ENCODE measurements at regions of chr17 and their contacts with region 1.

Region 1: DNA sequence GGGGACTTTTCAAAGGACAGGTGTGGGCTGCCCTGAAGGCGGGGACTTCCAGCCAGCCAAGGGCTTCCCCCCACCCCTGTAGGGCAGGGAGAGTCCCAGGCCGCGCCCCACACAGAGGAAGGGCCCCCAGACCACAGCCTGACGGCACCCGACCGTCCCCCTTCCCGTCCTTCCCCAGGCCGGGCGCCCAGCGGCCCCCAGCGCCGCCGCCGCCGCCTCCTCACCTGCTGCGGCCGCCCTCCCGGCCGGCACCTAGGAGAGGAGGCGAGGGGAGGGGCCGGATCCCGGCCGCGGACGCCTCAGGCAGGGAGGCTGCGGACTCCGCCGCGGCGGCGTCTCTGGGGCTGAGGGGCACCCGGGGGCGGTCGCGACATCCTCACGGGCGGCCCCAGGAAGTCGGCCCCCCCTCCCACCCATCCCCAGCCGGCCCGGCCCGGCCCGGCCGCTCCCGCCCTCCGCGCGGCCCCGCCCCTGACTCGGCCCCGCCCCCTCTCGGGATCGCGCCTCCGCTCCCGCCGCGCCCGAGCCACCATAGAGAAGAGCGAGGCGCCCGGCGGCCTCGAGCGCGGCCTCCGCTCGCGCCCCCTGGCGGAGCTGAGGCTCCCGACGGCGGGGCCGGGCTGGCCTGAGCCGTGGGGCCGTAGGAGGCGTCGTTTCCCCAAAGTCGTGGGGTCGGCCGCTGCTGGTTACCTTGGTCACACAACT is 25.5 kb upstream of the RFFL start:
- DNase-seq: peak; percentile 92
- ATAC-seq: peak; percentile 84
- H3K4me3 ChIP-seq: peak overlapping the region; percentile 48 to 86 (median 76)
- H3K4me3 Mint-ChIP-seq: peak overlapping the region; percentile 94
- H3K27ac ChIP-seq: peak overlapping the region; percentile 91 to 92
- H3K27ac Mint-ChIP-seq: peak overlapping the region; percentile 94
- H3K4me1 ChIP-seq: peaks cover 17 to 21% of the 10 kb centered on the region in 2 donors
- H3K4me1 Mint-ChIP-seq: peaks cover 36% of the 10 kb centered on the region
- H3K27me3 ChIP-seq: no peaks in the 10 kb centered on the region
- H3K27me3 Mint-ChIP-seq: no peaks in the 10 kb centered on the region
- CTCF ChIP-seq: peak; percentile 73

Region 2: DNA sequence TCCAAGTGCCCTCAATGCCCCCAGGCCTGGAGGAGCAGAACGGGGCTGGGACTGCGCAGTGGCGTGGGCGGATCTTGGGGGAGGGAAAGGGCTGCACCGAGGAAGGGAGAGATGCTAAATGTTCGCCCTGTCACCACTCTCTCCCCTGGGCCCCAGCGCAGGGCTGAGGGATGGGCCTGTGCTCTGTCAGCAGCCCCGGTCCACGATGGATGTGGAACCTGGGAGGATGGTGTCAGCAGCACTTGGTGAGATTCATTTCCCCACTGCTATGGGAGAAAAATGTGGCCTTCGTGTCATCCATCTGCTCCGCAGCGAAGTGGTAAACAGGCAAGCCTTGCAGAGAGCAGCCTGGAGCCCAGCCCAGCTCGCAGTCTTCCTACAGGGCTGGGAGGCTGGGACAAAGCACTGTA is 437.6 kb before region 1 on chr17:
- CTCF ChIA-PET with region 1: no interaction called
- POLR2A ChIA-PET with region 1: no interaction called
- intact Hi-C with region 1: no loop called
- DNase-seq: no peak
- ATAC-seq: no peak
- H3K4me3 ChIP-seq: no peak overlapping the region
- H3K4me3 Mint-ChIP-seq: no peak overlapping the region
- H3K27ac ChIP-seq: no peak overlapping the region
- H3K27ac Mint-ChIP-seq: no peak overlapping the region
- H3K4me1 ChIP-seq: no peaks in the 10 kb centered on the region
- H3K4me1 Mint-ChIP-seq: no peaks in the 10 kb centered on the region
- H3K27me3 ChIP-seq: peaks cover 0 to 7% (median 0%) of the 10 kb centered on the region in 4 experiments
- H3K27me3 Mint-ChIP-seq: peaks cover 36% of the 10 kb centered on the region
- CTCF ChIP-seq: no peak

Region 3: DNA sequence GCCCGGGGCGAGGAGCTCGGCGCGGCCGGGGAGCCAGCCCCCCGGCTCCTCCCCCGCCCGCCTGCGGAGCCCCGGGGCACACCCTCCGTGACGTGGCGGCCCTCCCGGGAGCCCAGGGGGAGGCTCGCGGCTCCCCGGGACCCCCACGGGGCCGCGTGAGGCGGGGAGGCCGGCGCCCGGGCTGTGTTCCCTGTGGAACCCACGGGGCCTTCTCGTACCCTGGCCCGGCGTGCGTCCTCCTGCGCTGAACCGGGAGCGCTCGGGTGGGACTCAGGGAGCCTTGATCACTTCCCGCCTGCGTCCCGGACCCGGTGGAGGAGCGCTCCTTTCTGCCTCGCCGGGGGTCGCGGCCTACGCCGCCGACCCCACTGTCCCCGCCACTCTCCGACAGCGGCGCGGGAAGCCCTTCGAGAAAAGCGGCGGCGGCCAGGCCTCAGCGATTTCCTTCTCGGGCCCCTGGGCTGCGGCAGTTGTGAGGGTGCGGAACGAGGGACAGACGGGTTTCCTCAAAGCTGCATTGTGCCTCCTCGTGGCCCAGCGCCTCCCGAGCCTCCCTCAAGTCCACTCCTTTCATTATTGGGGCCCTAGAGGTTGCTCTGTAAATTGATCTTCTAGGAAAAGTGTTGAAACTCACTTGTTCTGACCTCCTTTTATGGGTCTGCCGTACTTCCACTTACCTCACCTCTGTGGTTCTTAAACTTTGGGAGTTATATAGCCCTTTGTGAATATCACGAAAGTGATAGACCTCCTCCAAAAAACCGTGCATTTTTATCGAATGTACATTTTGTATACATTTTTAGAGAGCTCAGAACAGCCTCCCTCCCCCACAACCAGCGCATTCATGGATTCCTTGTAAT is 108.1 kb before region 1 on chr17:
- CTCF ChIA-PET with region 1: interaction called, 7 read pairs
- POLR2A ChIA-PET with region 1: interaction called, 5 read pairs
- intact Hi-C with region 1: loop called (anchors 1 kb)
- DNase-seq: peak; percentile 88
- ATAC-seq: peak; percentile 91
- H3K4me3 ChIP-seq: peak overlapping the region; percentile 8 to 98 (median 93)
- H3K4me3 Mint-ChIP-seq: peak overlapping the region; percentile 98
- H3K27ac ChIP-seq: peak overlapping the region; percentile 95 to 99
- H3K27ac Mint-ChIP-seq: peak overlapping the region; percentile 97
- H3K4me1 ChIP-seq: peaks cover 15 to 16% of the 10 kb centered on the region in 2 donors
- H3K4me1 Mint-ChIP-seq: peaks cover 28% of the 10 kb centered on the region
- H3K27me3 ChIP-seq: no peaks in the 10 kb centered on the region
- H3K27me3 Mint-ChIP-seq: no peaks in the 10 kb centered on the region
- CTCF ChIP-seq: peak; percentile 63

Region 4: GRCh38 chr17:35022536-35023063 is 66.4 kb before region 1 on chr17:
- CTCF ChIA-PET with region 1: interaction called, 18 read pairs
- POLR2A ChIA-PET with region 1: interaction called, 3 read pairs
- intact Hi-C with region 1: loop called (anchors 2 kb)
- DNase-seq: peak; percentile 42
- ATAC-seq: peak; percentile 81
- H3K4me3 ChIP-seq: no peak overlapping the region
- H3K4me3 Mint-ChIP-seq: no peak overlapping the region
- H3K27ac ChIP-seq: peak overlapping the region; percentile 26 to 31
- H3K27ac Mint-ChIP-seq: peak overlapping the region; percentile 81
- H3K4me1 ChIP-seq: peaks cover 7 to 8% of the 10 kb centered on the region in 2 donors
- H3K4me1 Mint-ChIP-seq: peaks cover 11% of the 10 kb centered on the region
- H3K27me3 ChIP-seq: no peaks in the 10 kb centered on the region
- H3K27me3 Mint-ChIP-seq: no peaks in the 10 kb centered on the region
- CTCF ChIP-seq: no peak

Region 5: DNA sequence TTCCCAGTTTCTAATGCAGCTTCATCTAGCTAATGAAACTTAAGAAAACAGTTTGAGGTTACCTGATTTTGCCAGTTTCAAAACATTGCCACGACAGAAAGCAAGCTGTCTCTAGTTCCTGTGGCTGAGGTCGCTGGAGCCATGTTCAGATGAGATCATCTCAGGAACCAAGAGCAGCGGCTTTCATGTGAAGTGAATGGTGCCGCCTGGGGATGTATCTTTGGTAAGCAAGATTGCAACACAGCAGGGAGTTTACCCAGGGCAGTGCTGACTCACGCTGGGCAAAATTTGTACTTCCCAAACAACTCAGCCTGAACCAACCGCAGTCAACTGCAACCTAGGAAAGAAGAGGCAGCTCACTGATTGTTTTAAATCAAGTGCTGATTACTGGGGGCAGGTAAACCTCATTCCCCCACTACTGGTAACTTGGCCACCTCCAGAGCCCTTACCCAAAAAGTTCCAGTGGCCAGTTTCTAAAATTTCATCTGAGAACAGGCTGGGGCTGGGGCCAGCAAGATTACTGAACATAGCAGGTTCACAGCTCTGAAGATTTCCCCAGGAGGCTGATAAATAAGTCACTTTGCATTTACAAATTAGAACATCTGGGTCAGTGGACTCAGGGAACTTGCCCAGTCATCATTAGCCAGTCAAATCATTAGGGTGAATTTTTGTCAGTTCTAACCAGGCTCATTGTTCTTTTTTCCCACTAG is 25.4 kb before region 1 on chr17 and contains the start of gene RFFL:
- CTCF ChIA-PET with region 1: interaction called, 15 read pairs
- POLR2A ChIA-PET with region 1: no interaction called
- intact Hi-C with region 1: loop called (anchors 1 kb)
- DNase-seq: peak; percentile 82
- ATAC-seq: peak; percentile 97
- H3K4me3 ChIP-seq: peak within 1 kb of the TSS in 3 of 5 experiments; percentile 20 to 38 (median 30)
- H3K4me3 Mint-ChIP-seq: peak within 1 kb of the TSS; percentile 75
- H3K27ac ChIP-seq: peak within 1 kb of the TSS; percentile 42 to 63
- H3K27ac Mint-ChIP-seq: peak within 1 kb of the TSS; percentile 90
- H3K4me1 ChIP-seq: peaks cover 11 to 12% of the 10 kb centered on the region in 2 donors
- H3K4me1 Mint-ChIP-seq: peaks cover 28% of the 10 kb centered on the region
- H3K27me3 ChIP-seq: no peaks in the 10 kb centered on the region
- H3K27me3 Mint-ChIP-seq: no peaks in the 10 kb centered on the region
- CTCF ChIP-seq: no peak
- total RNA-seq, gene RFFL: 36.2 and 36.9 TPM in 2 replicates

Region 6: DNA sequence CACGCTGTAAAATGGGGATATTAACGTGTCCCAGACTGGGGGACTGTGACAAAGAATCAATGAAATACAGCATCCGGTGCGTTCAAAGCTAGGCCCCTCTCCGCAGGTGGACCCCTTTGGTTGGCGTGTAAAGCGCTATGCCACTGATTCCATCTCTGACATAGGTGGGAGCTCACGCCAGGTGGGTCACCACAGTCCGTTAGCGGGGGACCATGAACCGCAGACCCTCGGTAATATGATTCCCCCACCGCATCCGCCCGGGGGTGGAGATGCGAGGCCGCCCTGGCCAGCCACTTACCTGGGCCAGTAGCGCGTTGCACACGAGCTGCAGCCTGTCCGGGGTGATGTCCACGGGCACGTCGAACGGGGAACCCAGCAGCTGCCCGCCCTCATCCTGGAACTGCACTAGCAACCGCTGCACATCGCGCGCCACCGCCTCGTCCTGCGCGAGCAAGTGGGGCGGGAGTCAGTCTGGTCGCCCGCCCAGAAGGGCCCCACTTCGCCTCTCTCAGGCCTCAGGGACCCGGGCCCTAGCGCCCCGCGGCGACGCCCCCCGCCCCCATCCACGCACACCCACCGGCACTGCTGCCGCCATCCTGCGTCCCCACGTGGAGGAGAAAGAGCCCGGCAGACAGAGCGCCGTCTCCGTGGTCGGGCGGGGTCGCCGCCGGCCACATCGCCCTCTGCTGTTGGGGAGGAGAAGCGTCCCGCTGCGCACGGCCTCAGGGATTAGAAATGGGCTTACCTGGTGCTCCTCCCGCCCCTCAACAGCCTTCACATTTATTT is 52.8 kb after region 1 on chr17 and contains the start of gene NLE1:
- CTCF ChIA-PET with region 1: interaction called, 12 read pairs
- POLR2A ChIA-PET with region 1: no interaction called
- intact Hi-C with region 1: loop called (anchors 1 kb)
- DNase-seq: peak; percentile 89
- ATAC-seq: peak; percentile 98
- H3K4me3 ChIP-seq: peak within 1 kb of the TSS; percentile 73 to 93 (median 84)
- H3K4me3 Mint-ChIP-seq: peak within 1 kb of the TSS; percentile 87
- H3K27ac ChIP-seq: peak within 1 kb of the TSS in 1 of 2 donors; percentile 64
- H3K27ac Mint-ChIP-seq: peak within 1 kb of the TSS; percentile 56
- H3K4me1 ChIP-seq: peaks cover 5 to 11% of the 10 kb centered on the region in 2 donors
- H3K4me1 Mint-ChIP-seq: peaks cover 20% of the 10 kb centered on the region
- H3K27me3 ChIP-seq: no peaks in the 10 kb centered on the region
- H3K27me3 Mint-ChIP-seq: no peaks in the 10 kb centered on the region
- CTCF ChIP-seq: peak; percentile 95
- total RNA-seq, gene NLE1: 13.7 and 17.5 TPM in 2 replicates

Region 7: DNA sequence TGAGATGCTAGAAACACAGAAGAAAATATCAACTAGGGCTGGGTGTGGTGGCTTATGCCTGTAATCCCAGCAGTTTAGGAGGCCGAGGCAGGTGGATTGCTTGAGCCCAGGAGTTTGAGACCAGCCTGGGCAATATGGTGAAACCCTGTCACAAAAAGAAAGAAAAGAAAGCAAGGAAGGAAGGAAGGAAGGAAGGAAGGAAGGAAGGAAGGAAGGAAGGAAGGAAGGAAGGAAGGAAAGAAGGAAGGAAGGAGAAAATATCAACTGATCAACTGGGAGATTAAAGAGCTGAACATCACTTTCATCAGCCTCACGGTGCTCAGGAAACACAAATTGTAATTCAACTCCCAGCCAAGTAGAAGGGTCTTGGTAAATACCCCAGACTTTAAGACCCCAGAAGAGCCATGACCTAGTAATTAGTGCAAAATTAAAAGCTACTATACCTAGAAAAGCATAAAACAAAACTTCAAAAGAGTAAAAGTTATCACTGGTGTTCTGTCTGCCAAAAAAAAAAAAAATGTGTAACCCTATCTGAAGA is 387.3 kb after region 1 on chr17:
- CTCF ChIA-PET with region 1: no interaction called
- POLR2A ChIA-PET with region 1: no interaction called
- intact Hi-C with region 1: no loop called
- DNase-seq: no peak
- ATAC-seq: no peak
- H3K4me3 ChIP-seq: no peak overlapping the region
- H3K4me3 Mint-ChIP-seq: no peak overlapping the region
- H3K27ac ChIP-seq: no peak overlapping the region
- H3K27ac Mint-ChIP-seq: no peak overlapping the region
- H3K4me1 ChIP-seq: no peaks in the 10 kb centered on the region
- H3K4me1 Mint-ChIP-seq: no peaks in the 10 kb centered on the region
- H3K27me3 ChIP-seq: no peaks in the 10 kb centered on the region
- H3K27me3 Mint-ChIP-seq: peaks cover 11% of the 10 kb centered on the region
- CTCF ChIP-seq: no peak